Activated naive CD4-positive, alpha-beta T cell treated with anti-CD3 and anti-CD28 coated beads for 36 hours (primary cell): ENCODE measurements at regions of chr6 and their contacts with region 1.

Region 1: DNA sequence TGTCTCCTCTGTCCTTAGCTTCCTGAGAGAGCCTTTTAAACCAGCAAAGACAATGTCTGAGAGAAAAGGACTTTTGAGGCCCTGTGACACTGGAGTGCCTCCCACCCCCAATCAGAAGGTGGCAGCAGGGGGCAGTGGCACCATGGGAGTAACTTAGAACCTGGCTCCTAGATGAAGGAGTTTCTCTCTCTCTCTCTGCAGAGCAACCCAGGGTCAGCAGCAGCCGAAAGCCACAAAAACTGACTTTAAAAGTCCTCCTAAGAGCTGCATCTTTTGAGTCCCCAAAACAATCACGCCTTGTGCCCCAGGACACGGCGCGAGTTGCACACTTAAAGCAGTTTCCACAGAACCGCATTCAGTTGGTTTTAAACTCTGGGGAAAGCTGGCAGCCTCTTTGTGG is 5.3 kb upstream of the TCP11 start:
- DNase-seq: peak; percentile 68
- H3K4me3 Mint-ChIP-seq: no peak overlapping the region
- H3K27ac Mint-ChIP-seq: no peak overlapping the region
- H3K4me1 Mint-ChIP-seq: peaks cover 22% of the 10 kb centered on the region
- H3K27me3 Mint-ChIP-seq: peaks cover 6% of the 10 kb centered on the region

Region 2: DNA sequence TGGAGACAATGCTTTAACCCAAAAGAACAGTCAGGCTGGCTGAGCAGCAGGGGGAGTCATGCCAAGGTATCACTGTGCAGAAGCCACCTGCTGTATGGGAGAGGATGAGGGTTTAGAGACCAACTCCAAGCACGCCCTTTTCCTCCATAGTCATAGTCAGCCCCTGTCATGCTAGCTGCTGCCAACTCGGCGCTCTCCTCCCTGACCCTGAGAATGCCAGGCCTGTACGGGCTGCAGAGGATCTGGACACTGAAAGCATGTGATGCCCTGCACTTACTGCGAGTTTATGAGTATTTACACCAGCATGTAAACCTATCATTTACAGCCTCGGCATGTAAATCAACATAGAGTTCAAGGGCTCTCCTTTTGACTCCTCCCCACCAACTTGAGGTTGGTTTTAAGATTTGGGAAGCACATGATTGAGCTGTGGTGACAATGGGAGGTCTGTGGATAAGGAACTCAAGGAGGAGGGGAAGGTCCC is 55.7 kb after region 1 on chr6:
- CTCF ChIA-PET with region 1: interaction called, 99 read pairs
- intact Hi-C with region 1: loop called (anchors 1 kb)
- DNase-seq: no peak
- H3K4me3 Mint-ChIP-seq: no peak overlapping the region
- H3K27ac Mint-ChIP-seq: no peak overlapping the region
- H3K4me1 Mint-ChIP-seq: no peaks in the 10 kb centered on the region
- H3K27me3 Mint-ChIP-seq: peaks cover 15% of the 10 kb centered on the region

Region 3: DNA sequence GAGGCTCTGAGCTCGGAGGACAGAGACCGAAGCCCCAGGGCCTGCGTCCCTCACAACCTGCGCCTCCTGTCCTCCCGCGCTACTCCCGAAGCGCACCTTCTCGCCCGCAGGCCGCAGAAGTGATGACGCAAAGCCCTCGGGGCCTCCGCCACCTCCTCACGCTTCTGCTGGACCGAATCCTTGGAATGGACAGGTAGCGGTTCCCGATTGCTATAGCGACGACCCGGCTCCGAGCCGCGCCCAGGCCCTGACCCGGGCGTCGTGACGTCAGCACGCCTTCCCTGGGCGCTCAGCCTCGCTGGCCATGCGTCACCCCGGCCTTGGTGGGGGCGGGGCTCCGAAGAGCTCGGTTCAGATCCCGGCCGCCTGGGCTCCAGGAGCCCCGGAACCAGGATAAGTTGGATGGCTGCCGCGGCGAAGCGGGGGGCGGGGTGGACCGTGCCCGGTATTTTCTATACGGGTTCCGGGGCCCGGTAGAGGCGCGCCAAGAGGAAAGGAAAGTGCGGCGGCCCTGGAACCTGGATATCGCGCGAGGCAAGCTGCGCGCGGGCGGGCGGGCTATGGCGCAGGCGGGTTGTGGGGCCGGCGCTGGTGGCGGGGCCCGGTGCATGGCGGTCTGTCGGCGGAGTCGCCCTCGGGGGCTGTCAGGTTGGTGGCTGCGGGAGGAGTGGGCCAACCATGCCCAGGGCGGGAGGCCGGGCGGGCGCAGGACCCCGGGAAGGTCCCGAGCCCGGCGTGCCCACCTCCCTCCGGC is 112.9 kb after region 1 on chr6 and contains the start of gene ZNF76:
- CTCF ChIA-PET with region 1: no interaction called
- intact Hi-C with region 1: loop called (anchors 5 kb)
- DNase-seq: peak; percentile 89
- H3K4me3 Mint-ChIP-seq: peak within 1 kb of the TSS; percentile 96
- H3K27ac Mint-ChIP-seq: peak within 1 kb of the TSS; percentile 86
- H3K4me1 Mint-ChIP-seq: peaks cover 45% of the 10 kb centered on the region
- H3K27me3 Mint-ChIP-seq: no peaks in the 10 kb centered on the region
- total RNA-seq, gene ZNF76: 32.4 to 38.2 TPM

Region 4: DNA sequence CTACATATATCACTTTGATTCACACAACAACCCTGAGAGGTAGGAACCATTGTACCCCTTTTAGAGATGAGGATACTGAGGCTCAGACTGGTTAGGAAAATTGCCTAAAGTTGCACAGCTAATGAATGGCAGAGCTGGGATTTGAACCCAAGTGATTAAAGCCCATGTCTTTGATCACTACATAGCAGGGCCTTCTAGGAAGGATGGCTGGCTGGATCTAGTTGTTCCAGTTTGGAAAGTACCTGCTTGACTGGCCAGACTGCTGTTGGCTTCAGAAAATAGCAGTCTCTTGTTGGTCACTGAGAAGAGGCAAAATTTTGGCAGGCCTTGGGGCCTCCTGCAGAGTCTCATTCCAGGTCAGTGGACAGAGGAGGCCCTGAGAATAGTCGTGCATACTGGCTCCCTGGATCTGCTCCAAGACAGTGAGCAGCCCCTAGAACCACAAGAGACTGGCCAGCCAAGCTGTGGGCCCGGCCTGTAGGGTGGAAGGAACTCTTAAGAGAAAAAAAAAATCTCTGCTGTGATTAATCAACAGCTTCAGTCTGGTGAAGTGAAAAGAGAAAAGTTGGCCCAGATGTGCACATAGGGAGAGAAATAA is 213.4 kb after region 1 on chr6:
- CTCF ChIA-PET with region 1: no interaction called
- intact Hi-C with region 1: no loop called
- DNase-seq: no peak
- H3K4me3 Mint-ChIP-seq: no peak overlapping the region
- H3K27ac Mint-ChIP-seq: no peak overlapping the region
- H3K4me1 Mint-ChIP-seq: peaks cover 39% of the 10 kb centered on the region
- H3K27me3 Mint-ChIP-seq: no peaks in the 10 kb centered on the region